Activated CD8-positive, alpha-beta T cell treated with anti-CD3 and anti-CD28 coated beads for 36 hours (primary cell): ENCODE measurements at regions of chr22 and their contacts with region 1.

Region 1: GRCh38 chr22:22848364-22848866 is 39.2 kb upstream of the IGLL5 start:
- DNase-seq: peak; percentile 82
- ATAC-seq: peak; percentile 93
- H3K4me3 Mint-ChIP-seq: no peak overlapping the region
- H3K27ac Mint-ChIP-seq: no peak overlapping the region
- H3K4me1 Mint-ChIP-seq: peaks cover 32% of the 10 kb centered on the region
- H3K27me3 Mint-ChIP-seq: no peaks in the 10 kb centered on the region
- CTCF ChIP-seq: peak; percentile 97

Region 2: GRCh38 chr22:22753526-22754267 is 94.7 kb before region 1 on chr22:
- CTCF ChIA-PET with region 1: interaction called, 19 read pairs
- POLR2A ChIA-PET with region 1: no interaction called
- intact Hi-C with region 1: no loop called
- DNase-seq: peak; percentile 89
- ATAC-seq: peak; percentile 98
- H3K4me3 Mint-ChIP-seq: no peak overlapping the region
- H3K27ac Mint-ChIP-seq: peak overlapping the region; percentile 81
- H3K4me1 Mint-ChIP-seq: peaks cover 51% of the 10 kb centered on the region
- H3K27me3 Mint-ChIP-seq: no peaks in the 10 kb centered on the region
- CTCF ChIP-seq: peak; percentile 92

Region 3: DNA sequence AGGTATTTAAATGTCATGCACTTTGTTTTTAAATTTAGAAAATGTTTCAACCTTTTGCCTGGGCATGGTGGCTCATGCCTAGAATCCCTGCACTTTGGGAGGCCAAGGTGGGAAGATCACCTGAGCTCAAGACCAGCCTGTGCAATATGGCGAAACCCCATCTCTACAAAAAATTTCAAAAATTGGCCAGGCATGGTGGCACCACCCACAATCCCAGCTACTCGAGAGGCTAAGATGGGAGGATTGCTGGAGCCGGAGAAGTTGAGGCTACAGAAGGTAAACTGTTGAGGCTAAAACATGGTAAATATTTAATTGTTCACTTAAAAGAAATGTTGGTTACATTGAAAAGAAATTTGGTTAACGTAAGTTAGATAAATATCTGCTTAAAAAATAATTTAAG is 69.2 kb before region 1 on chr22:
- CTCF ChIA-PET with region 1: no interaction called
- POLR2A ChIA-PET with region 1: no interaction called
- intact Hi-C with region 1: no loop called
- DNase-seq: no peak
- ATAC-seq: no peak
- H3K4me3 Mint-ChIP-seq: no peak overlapping the region
- H3K27ac Mint-ChIP-seq: no peak overlapping the region
- H3K4me1 Mint-ChIP-seq: no peaks in the 10 kb centered on the region
- H3K27me3 Mint-ChIP-seq: no peaks in the 10 kb centered on the region
- CTCF ChIP-seq: no peak

Region 4: GRCh38 chr22:22802339-22802970 is 46.0 kb before region 1 on chr22:
- CTCF ChIA-PET with region 1: interaction called, 92 read pairs
- POLR2A ChIA-PET with region 1: no interaction called
- intact Hi-C with region 1: no loop called
- DNase-seq: peak; percentile 66
- ATAC-seq: peak; percentile 64
- H3K4me3 Mint-ChIP-seq: no peak overlapping the region
- H3K27ac Mint-ChIP-seq: no peak overlapping the region
- H3K4me1 Mint-ChIP-seq: peaks cover 28% of the 10 kb centered on the region
- H3K27me3 Mint-ChIP-seq: no peaks in the 10 kb centered on the region
- CTCF ChIP-seq: peak; percentile 80

Region 5: DNA sequence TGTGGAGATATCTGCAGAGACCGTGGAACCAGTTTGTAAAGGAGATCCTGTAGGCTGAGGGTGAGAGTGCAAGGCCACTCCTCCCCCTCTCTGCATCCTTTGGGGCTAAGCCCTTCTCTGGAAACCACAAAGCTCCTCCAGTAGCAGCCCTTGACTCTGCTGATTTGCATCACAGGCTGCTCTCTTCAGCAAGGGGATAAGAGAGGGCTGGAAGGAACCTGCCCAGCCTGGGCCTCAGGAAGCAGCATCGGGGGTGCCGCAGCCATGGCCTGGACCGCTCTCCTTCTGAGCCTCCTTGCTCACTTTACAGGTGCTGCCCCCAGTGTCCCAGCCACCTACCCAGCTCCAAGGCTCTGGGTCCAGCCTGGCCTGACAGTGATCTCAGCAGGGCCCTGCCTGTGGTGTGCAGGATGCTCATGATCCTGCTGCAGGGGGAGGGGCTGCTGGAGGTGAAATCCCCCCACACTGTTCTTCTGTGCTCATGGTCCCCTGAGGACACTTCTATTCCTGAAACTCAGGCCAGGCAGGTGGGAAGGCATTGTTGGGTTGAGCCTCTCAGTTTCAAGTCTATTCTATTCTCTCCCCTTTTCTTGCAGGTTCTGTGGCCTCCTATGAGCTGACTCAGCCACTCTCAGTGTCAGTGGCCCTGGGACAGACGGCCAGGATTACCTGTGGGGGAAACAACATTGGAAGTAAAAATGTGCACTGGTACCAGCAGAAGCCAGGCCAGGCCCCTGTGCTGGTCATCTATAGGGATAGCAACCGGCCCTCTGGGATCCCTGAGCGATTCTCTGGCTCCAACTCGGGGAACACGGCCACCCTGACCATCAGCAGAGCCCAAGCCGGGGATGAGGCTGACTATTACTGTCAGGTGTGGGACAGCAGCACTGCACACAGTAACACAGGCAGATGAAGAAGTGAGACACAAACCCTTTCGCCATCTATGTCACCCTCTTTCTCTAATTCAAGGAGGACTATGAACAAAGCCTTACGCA is 29.3 kb before region 1 on chr22:
- CTCF ChIA-PET with region 1: interaction called, 92 read pairs
- POLR2A ChIA-PET with region 1: no interaction called
- intact Hi-C with region 1: no loop called
- DNase-seq: peak; percentile 56
- ATAC-seq: peak; percentile 69
- H3K4me3 Mint-ChIP-seq: no peak overlapping the region
- H3K27ac Mint-ChIP-seq: peak overlapping the region; percentile 70
- H3K4me1 Mint-ChIP-seq: peaks cover 92% of the 10 kb centered on the region
- H3K27me3 Mint-ChIP-seq: no peaks in the 10 kb centered on the region
- CTCF ChIP-seq: no peak

Region 6: GRCh38 chr22:22836635-22837034 is 11.8 kb before region 1 on chr22:
- CTCF ChIA-PET with region 1: interaction called, 44 read pairs
- POLR2A ChIA-PET with region 1: no interaction called
- intact Hi-C with region 1: no loop called
- DNase-seq: no peak
- ATAC-seq: no peak
- H3K4me3 Mint-ChIP-seq: no peak overlapping the region
- H3K27ac Mint-ChIP-seq: no peak overlapping the region
- H3K4me1 Mint-ChIP-seq: peaks cover 21% of the 10 kb centered on the region
- H3K27me3 Mint-ChIP-seq: no peaks in the 10 kb centered on the region
- CTCF ChIP-seq: no peak

Region 7: DNA sequence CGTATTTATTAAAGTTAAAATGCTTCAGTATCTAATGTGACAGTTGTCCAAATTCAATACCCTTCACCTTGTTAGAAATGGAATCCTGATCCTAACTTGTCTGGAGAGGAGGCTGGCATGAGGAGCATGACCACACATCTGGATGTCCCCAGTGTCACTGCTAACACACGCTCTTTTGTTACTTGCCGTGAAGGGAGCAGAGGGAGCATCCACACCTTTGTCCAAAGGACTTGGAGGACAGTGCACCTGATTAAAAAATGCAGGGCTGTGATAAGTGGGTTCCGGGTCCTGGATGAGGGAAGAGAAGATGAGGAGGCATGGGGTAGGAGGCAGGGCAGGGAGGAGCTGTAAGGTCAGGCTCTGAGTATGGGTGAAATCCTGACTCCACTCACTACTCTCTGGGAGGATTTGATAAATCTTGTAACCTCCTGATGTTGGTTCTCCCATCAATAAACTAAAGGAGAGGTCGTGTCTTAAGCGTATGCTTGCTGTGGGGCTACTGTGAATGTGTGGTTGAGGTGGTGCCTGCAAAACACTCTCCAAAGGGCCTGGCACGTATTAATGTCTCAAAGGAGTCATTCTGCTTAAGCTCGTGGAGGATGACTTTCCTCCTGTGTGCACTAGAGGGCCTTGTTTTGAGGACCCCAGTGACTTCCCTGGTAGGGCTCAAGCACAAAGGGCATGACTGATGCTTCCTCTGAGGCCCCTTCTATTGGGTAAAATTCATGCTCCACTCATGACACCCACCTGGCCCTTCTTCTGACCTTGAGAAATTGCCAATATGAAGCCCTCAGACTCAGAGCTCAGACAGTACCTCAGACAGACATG is 22.4 kb after region 1 on chr22:
- CTCF ChIA-PET with region 1: interaction called, 17 read pairs
- POLR2A ChIA-PET with region 1: interaction called, 3 read pairs
- intact Hi-C with region 1: no loop called
- DNase-seq: no peak
- ATAC-seq: peak; percentile 51
- H3K4me3 Mint-ChIP-seq: no peak overlapping the region
- H3K27ac Mint-ChIP-seq: no peak overlapping the region
- H3K4me1 Mint-ChIP-seq: peaks cover 14% of the 10 kb centered on the region
- H3K27me3 Mint-ChIP-seq: no peaks in the 10 kb centered on the region
- CTCF ChIP-seq: peak; percentile 32

Region 8: GRCh38 chr22:22894740-22895731 is 46.6 kb after region 1 on chr22:
- CTCF ChIA-PET with region 1: no interaction called
- POLR2A ChIA-PET with region 1: no interaction called
- intact Hi-C with region 1: no loop called
- DNase-seq: no peak
- ATAC-seq: no peak
- H3K4me3 Mint-ChIP-seq: no peak overlapping the region
- H3K27ac Mint-ChIP-seq: no peak overlapping the region
- H3K4me1 Mint-ChIP-seq: no peaks in the 10 kb centered on the region
- H3K27me3 Mint-ChIP-seq: peaks cover 26% of the 10 kb centered on the region
- CTCF ChIP-seq: no peak

Region 9: GRCh38 chr22:22942511-22943329 is 94.3 kb after region 1 on chr22:
- CTCF ChIA-PET with region 1: interaction called, 18 read pairs
- POLR2A ChIA-PET with region 1: interaction called, 3 read pairs
- intact Hi-C with region 1: no loop called
- DNase-seq: peak; percentile 91
- ATAC-seq: peak; percentile 83
- H3K4me3 Mint-ChIP-seq: no peak overlapping the region
- H3K27ac Mint-ChIP-seq: no peak overlapping the region
- H3K4me1 Mint-ChIP-seq: peaks cover 6% of the 10 kb centered on the region
- H3K27me3 Mint-ChIP-seq: peaks cover 1% of the 10 kb centered on the region
- CTCF ChIP-seq: peak; percentile 91